Activated B cell treated with CpG ODN at 0.5 μM for 24 hours (primary cell): ENCODE measurements at regions of chr7 and their contacts with region 1.

Region 1: DNA sequence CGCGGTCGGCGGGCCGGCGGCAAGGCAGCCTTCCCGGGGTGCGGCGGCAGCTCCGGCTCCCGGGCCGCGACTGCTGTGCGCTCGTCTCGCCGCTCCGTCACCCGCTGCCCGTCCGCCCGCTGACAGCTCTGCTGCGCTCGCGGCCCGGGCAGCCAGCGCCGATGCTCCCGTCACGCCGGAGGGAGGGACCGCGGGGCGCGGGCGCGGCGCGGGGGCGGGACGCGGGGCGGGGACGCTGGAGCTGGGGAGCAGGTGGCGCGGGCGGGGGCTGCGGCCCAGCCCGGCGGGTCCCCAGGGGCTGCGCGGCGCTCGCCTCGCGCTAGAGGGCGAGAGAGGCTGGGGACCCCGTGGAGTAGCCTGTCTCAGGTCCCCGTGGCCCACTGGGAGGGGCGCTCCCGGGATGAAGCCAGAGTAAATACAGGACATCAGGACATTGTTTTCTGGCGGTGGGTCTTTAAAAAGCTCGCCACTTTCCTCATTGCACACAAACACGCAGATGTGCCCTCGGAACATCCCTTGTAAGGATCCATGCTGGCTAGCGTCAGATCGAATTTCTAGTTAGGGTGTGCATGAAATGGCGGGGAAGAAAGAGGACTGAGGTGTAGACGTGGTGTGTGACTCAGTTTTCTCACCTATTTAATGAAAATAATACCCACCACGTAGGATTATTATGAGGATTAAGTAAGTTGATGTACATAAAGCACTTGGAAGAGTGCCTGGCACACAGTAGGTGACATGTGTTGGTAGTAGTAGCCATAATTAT is at the start of gene ELAPOR2:
- DNase-seq: peak; percentile 94
- ATAC-seq: peak; percentile 96
- H3K4me3 Mint-ChIP-seq: peak within 1 kb of the TSS; percentile 88
- H3K27ac Mint-ChIP-seq: peak within 1 kb of the TSS; percentile 77
- H3K4me1 Mint-ChIP-seq: peaks cover 14% of the 10 kb centered on the region
- H3K27me3 Mint-ChIP-seq: no peaks in the 10 kb centered on the region
- CTCF ChIP-seq: no peak
- total RNA-seq, gene ELAPOR2: 4.5 and 5.1 TPM in 2 replicates

Region 2: DNA sequence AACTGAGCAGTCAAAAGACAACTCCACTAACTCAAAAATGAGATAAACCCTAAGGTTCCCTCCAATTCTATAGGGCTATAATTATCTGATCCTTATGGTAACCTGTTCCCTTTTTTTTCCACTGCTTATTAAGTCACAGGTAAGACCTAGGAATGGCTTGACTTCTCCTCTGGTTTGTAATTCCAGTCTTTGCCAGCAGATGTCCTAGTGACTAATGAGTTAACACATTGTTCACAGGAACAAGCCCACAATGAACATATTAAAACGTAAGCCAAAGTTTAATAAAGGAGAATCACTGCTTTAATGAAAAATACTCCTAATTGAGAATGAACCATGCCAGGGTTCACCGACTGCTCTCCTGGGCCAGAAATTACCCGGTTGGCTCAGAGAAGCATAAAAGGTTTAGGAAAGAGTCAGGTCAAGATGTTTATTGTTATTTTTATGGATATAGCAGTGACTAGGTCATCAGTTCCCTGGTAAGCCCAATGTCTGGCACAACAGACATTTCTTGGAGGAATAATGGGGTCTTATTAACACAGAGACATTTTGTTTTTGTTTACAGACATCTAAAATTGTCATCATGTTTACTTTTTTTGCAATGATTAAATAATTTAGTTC is 120.4 kb before region 1 on chr7:
- CTCF ChIA-PET with region 1: interaction called, 3 read pairs
- POLR2A ChIA-PET with region 1: no interaction called
- intact Hi-C with region 1: loop called (anchors 1 kb)
- DNase-seq: no peak
- ATAC-seq: peak; percentile 66
- H3K4me3 Mint-ChIP-seq: no peak overlapping the region
- H3K27ac Mint-ChIP-seq: no peak overlapping the region
- H3K4me1 Mint-ChIP-seq: no peaks in the 10 kb centered on the region
- H3K27me3 Mint-ChIP-seq: no peaks in the 10 kb centered on the region
- CTCF ChIP-seq: peak; percentile 35

Region 3: GRCh38 chr7:87038993-87039716 is 20.6 kb before region 1 on chr7:
- CTCF ChIA-PET with region 1: no interaction called
- POLR2A ChIA-PET with region 1: no interaction called
- intact Hi-C with region 1: loop called (anchors 2 kb)
- DNase-seq: no peak
- ATAC-seq: no peak
- H3K4me3 Mint-ChIP-seq: peak overlapping the region; percentile 75
- H3K27ac Mint-ChIP-seq: peak overlapping the region; percentile 1
- H3K4me1 Mint-ChIP-seq: no peaks in the 10 kb centered on the region
- H3K27me3 Mint-ChIP-seq: peaks cover 5% of the 10 kb centered on the region
- CTCF ChIP-seq: no peak

Region 4: GRCh38 chr7:87075671-87076404 is 16.1 kb after region 1 on chr7:
- CTCF ChIA-PET with region 1: no interaction called
- POLR2A ChIA-PET with region 1: no interaction called
- intact Hi-C with region 1: loop called (anchors 2 kb)
- DNase-seq: no peak
- ATAC-seq: no peak
- H3K4me3 Mint-ChIP-seq: no peak overlapping the region
- H3K27ac Mint-ChIP-seq: no peak overlapping the region
- H3K4me1 Mint-ChIP-seq: peaks cover 7% of the 10 kb centered on the region
- H3K27me3 Mint-ChIP-seq: peaks cover 15% of the 10 kb centered on the region
- CTCF ChIP-seq: no peak

Region 5: DNA sequence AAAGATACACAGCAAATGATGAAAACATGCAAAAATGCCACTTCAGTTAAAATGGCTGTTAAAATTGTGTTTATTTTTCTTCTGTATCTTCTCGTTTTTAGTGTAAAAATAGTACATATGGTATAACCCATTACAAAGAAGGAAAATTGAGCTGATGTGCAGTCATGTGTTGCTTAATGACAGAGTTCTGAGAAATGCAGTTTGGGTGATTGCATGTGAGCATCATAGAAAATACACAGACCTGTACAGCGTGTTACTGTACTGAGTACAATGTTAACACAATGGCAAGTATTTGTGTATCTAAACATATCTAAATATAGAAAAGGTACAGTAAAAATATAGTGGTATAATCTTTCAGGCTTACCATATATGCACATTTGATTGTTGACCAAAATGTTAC is 99.8 kb after region 1 on chr7:
- CTCF ChIA-PET with region 1: no interaction called
- POLR2A ChIA-PET with region 1: interaction called, 15 read pairs
- intact Hi-C with region 1: no loop called
- DNase-seq: no peak
- ATAC-seq: no peak
- H3K4me3 Mint-ChIP-seq: no peak overlapping the region
- H3K27ac Mint-ChIP-seq: no peak overlapping the region
- H3K4me1 Mint-ChIP-seq: peaks cover 53% of the 10 kb centered on the region
- H3K27me3 Mint-ChIP-seq: no peaks in the 10 kb centered on the region
- CTCF ChIP-seq: no peak

Region 6: GRCh38 chr7:87345166-87345927 is 285.6 kb after region 1 on chr7 and contains the start of gene CROT:
- CTCF ChIA-PET with region 1: no interaction called
- POLR2A ChIA-PET with region 1: no interaction called
- intact Hi-C with region 1: loop called (anchors 2 kb)
- DNase-seq: peak; percentile 95
- ATAC-seq: peak; percentile 98
- H3K4me3 Mint-ChIP-seq: peak within 1 kb of the TSS; percentile 96
- H3K27ac Mint-ChIP-seq: peak within 1 kb of the TSS; percentile 96
- H3K4me1 Mint-ChIP-seq: peaks cover 25% of the 10 kb centered on the region
- H3K27me3 Mint-ChIP-seq: no peaks in the 10 kb centered on the region
- CTCF ChIP-seq: no peak
- total RNA-seq, gene CROT: 7.9 and 9.2 TPM in 2 replicates

Region 7: GRCh38 chr7:88219781-88220747 is 1160.4 kb after region 1 on chr7 and contains the start of gene SRI:
- CTCF ChIA-PET with region 1: no interaction called
- POLR2A ChIA-PET with region 1: no interaction called
- intact Hi-C with region 1: loop called (anchors 10 kb)
- DNase-seq: peak; percentile 94
- ATAC-seq: peak; percentile 96
- H3K4me3 Mint-ChIP-seq: peak within 1 kb of the TSS; percentile 95
- H3K27ac Mint-ChIP-seq: peak within 1 kb of the TSS; percentile 92
- H3K4me1 Mint-ChIP-seq: peaks cover 25% of the 10 kb centered on the region
- H3K27me3 Mint-ChIP-seq: no peaks in the 10 kb centered on the region
- CTCF ChIP-seq: peak; percentile 73
- total RNA-seq, gene SRI: 97.4 and 101 TPM in 2 replicates